ENCODE measurements at regions of chr3 and their contacts with region 1.

Region 1: GRCh38 chr3:181932039-181932438 is 220.3 kb downstream of the SOX2 start:
- DNase-seq: no peak
- ATAC-seq: no peak
- H3K4me3 ChIP-seq: no peak overlapping the region
- H3K27ac ChIP-seq: no peak overlapping the region
- H3K4me1 ChIP-seq: no peaks in the 10 kb centered on the region
- H3K27me3 ChIP-seq: no peaks in the 10 kb centered on the region
- CTCF ChIP-seq: no peak

Region 2: GRCh38 chr3:181773921-181774320 is 158.1 kb before region 1 on chr3:
- CTCF ChIA-PET with region 1: no interaction called
- POLR2A ChIA-PET with region 1: no interaction called
- in situ Hi-C with region 1: no loop called
- intact Hi-C with region 1: no loop called
- DNase-seq: no peak
- ATAC-seq: no peak
- H3K4me3 ChIP-seq: no peak overlapping the region
- H3K27ac ChIP-seq: no peak overlapping the region
- H3K4me1 ChIP-seq: no peaks in the 10 kb centered on the region
- H3K27me3 ChIP-seq: no peaks in the 10 kb centered on the region
- CTCF ChIP-seq: no peak

Region 3: DNA sequence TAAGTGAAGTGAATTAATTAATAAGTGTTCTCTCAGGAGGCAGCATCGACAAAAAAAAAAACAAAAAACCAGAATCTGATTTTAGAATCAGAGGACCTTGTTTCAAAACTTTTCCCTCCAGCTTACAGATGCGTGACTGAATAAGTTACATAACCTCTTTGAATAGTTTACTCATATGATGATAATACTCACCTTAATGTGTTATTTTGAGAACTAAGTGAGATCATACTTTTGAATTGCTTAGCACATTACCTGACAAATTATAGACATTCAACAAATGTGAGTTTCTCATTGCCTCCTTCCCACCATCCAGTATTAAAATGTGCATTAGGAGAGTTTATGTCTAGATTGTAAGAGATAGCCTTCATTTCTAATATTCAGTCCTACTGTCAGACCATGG is 126.3 kb before region 1 on chr3:
- CTCF ChIA-PET with region 1: no interaction called
- POLR2A ChIA-PET with region 1: no interaction called
- in situ Hi-C with region 1: no loop called
- intact Hi-C with region 1: no loop called
- DNase-seq: no peak
- ATAC-seq: no peak
- H3K4me3 ChIP-seq: no peak overlapping the region
- H3K27ac ChIP-seq: no peak overlapping the region
- H3K4me1 ChIP-seq: no peaks in the 10 kb centered on the region
- H3K27me3 ChIP-seq: no peaks in the 10 kb centered on the region
- CTCF ChIP-seq: no peak

Region 4: GRCh38 chr3:181952221-181952620 is 20.2 kb after region 1 on chr3:
- CTCF ChIA-PET with region 1: interaction called, 13 read pairs
- POLR2A ChIA-PET with region 1: no interaction called
- in situ Hi-C with region 1: no loop called
- intact Hi-C with region 1: no loop called
- DNase-seq: no peak
- ATAC-seq: no peak
- H3K4me3 ChIP-seq: no peak overlapping the region
- H3K27ac ChIP-seq: no peak overlapping the region
- H3K4me1 ChIP-seq: no peaks in the 10 kb centered on the region
- H3K27me3 ChIP-seq: peaks cover 2% of the 10 kb centered on the region; the same call in 1 of the 2 replicates
- CTCF ChIP-seq: no peak

Region 5: GRCh38 chr3:182258538-182259177 is 326.6 kb after region 1 on chr3:
- CTCF ChIA-PET with region 1: no interaction called
- POLR2A ChIA-PET with region 1: no interaction called
- in situ Hi-C with region 1: no loop called
- intact Hi-C with region 1: no loop called
- DNase-seq: peak; percentile 28
- ATAC-seq: peak; percentile 78
- H3K4me3 ChIP-seq: no peak overlapping the region
- H3K27ac ChIP-seq: no peak overlapping the region
- H3K4me1 ChIP-seq: no peaks in the 10 kb centered on the region
- H3K27me3 ChIP-seq: 0 out of 2 replicates have a peak, but pooled peaks cover under 1% of the 10 kb centered on the region
- CTCF ChIP-seq: peak; percentile 81; the same call in 1 of the 2 replicates